Gastrocnemius medialis (tissue), 4 donors: ENCODE measurements at regions of chr9 and their contacts with region 1.

Region 1: DNA sequence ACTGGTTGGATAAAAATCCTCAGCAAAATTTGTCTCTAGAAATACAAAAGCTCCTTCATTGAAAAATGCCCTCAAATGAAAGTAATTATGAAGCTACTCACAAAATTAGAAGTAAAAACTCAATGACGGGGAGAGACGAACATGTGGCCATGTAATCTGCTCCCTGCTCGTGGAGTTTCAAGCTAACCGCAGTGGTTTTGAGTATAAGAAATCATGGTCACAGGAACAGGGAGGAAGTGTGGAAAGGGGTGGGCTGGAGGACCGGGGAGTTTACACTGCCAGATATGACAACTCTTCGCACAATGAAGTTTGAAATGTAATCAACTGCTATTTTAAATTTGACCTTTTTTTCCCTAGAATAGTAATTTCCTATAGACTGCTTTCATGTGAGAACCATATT is 765.4 kb upstream of the DMAC1 start:
- DNase-seq: no peak
- ATAC-seq: no peak
- H3K4me3 ChIP-seq: no peak overlapping the region
- H3K27ac ChIP-seq: no peak overlapping the region
- H3K4me1 ChIP-seq: no peaks in the 10 kb centered on the region
- H3K27me3 ChIP-seq: no peaks in the 10 kb centered on the region
- CTCF ChIP-seq: no peak
- POLR2A ChIP-seq: no peak

Region 2: DNA sequence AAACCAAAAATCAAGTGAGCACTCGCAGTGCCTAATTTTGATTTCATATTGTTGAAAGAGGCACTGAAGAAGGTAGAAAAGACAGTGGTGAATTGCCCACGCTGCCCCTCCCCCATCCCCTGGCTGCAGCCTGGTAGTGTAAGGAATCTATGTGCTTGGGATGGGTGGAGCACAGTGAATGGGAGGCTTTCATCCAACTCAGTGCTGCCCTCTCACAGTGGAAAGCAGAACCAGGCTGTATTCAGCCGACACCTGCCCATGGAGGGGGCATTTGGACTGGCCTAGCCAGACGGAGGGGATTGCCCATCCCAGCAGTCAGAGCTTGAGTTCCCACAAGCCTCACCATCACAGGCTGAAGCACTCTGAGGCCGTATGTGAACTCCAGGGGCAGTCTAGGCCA is 35.0 kb after region 1 on chr9:
- in situ Hi-C with region 1: no loop called
- intact Hi-C with region 1: loop called (anchors 2 kb)
- DNase-seq: no peak
- ATAC-seq: no peak
- H3K4me3 ChIP-seq: no peak overlapping the region
- H3K27ac ChIP-seq: no peak overlapping the region
- H3K4me1 ChIP-seq: no peaks in the 10 kb centered on the region
- H3K27me3 ChIP-seq: no peaks in the 10 kb centered on the region
- CTCF ChIP-seq: no peak
- POLR2A ChIP-seq: no peak

Region 3: DNA sequence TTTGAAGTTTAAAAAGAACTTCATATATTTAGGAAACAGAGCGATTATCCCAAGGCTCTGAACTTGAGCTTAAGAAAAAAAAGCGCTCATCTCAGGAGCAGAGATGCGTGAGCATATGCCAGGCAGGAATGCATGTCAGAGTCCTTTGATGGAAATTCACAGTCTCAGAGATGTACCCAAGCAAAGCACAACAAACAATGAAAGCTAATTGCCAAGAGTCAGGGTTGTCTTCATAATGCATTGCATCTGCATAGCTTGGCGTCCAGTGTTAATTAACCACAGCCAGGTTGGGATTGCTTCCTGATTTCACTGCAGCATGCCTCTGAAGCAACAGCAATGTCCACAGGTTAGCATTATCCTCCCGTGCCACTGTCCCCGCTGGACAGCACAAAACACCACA is 141.6 kb after region 1 on chr9:
- in situ Hi-C with region 1: no loop called
- intact Hi-C with region 1: no loop called
- DNase-seq: no peak
- ATAC-seq: no peak
- H3K4me3 ChIP-seq: no peak overlapping the region
- H3K27ac ChIP-seq: no peak overlapping the region
- H3K4me1 ChIP-seq: no peaks in the 10 kb centered on the region
- H3K27me3 ChIP-seq: no peaks in the 10 kb centered on the region
- CTCF ChIP-seq: no peak
- POLR2A ChIP-seq: no peak